ENCODE measurements at regions of chr12 and their contacts with region 1.

Region 1: GRCh38 chr12:70719672-70720420 is 82.6 kb upstream of the PTPRB start:
- DNase-seq: peak; percentile 55
- ATAC-seq: peak; percentile 76
- H3K4me3 Mint-ChIP-seq: peak overlapping the region; percentile 55
- H3K27ac Mint-ChIP-seq: no peak overlapping the region
- H3K4me1 Mint-ChIP-seq: peaks cover 19% of the 10 kb centered on the region
- H3K27me3 Mint-ChIP-seq: peaks cover 14% of the 10 kb centered on the region

Region 2: DNA sequence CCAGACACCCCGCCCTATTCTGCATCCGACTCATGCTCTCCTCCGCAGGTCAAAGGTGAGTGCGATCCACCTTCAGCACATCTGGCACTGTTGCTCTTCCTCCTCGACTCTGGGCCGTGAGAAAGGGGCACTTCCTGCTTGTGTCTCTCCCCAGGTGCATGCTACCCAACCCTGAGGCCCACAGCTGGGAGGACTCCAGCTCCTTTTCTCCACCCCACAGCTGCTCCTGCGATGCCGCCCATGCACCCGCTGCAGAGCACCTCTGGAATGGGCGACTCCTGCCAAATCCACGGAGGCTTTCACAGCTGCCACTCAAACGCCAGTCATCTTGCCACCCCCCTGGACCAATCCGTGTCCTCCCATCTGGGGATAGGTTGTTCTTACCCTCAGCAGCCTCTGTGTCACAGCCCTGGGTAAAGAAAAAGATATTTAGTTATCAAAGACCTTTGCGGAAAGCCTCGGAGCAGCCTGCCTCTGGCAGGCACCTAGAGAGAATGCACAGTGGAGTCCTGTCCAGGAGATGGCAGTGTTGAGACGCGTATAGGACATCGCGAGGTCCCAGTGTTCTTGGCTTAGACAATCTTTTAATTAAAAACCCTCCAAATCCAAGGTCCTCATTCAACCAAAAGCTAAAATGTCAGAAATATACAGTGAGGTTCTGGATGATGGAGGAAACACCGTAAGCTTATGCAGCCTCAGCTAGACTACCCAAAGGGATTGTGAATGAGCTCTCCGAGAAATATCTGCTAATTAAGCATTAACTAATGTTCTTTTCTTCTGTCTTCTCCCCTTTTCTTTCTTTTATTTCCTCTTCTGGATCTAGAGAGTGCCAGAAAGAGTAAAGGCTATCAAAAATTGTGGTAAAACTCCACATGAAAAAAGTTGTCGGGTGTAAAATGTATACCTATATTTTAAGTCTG is 840.5 kb before region 1 on chr12:
- CTCF ChIA-PET with region 1: interaction called, 4 read pairs
- POLR2A ChIA-PET with region 1: no interaction called
- intact Hi-C with region 1: loop called (anchors 1 to 5 kb)
- DNase-seq: peak; percentile 82
- ATAC-seq: peak; percentile 93
- H3K4me3 Mint-ChIP-seq: no peak overlapping the region
- H3K27ac Mint-ChIP-seq: no peak overlapping the region
- H3K4me1 Mint-ChIP-seq: peaks cover 6% of the 10 kb centered on the region
- H3K27me3 Mint-ChIP-seq: peaks cover 17% of the 10 kb centered on the region

Region 3: GRCh38 chr12:69900720-69901131 is 819.1 kb before region 1 on chr12:
- CTCF ChIA-PET with region 1: interaction called, 4 read pairs
- POLR2A ChIA-PET with region 1: no interaction called
- intact Hi-C with region 1: loop called (anchors 2 to 5 kb)
- DNase-seq: peak; percentile 76
- ATAC-seq: peak; percentile 30
- H3K4me3 Mint-ChIP-seq: no peak overlapping the region
- H3K27ac Mint-ChIP-seq: no peak overlapping the region
- H3K4me1 Mint-ChIP-seq: peaks cover 2% of the 10 kb centered on the region
- H3K27me3 Mint-ChIP-seq: no peaks in the 10 kb centered on the region

Region 4: GRCh38 chr12:70590051-70590450 is 129.8 kb before region 1 on chr12:
- CTCF ChIA-PET with region 1: interaction called, 5 read pairs
- POLR2A ChIA-PET with region 1: no interaction called
- intact Hi-C with region 1: loop called (anchors 1 kb)
- DNase-seq: peak; percentile 80
- ATAC-seq: peak; percentile 74
- H3K4me3 Mint-ChIP-seq: no peak overlapping the region
- H3K27ac Mint-ChIP-seq: no peak overlapping the region
- H3K4me1 Mint-ChIP-seq: no peaks in the 10 kb centered on the region
- H3K27me3 Mint-ChIP-seq: peaks cover 22% of the 10 kb centered on the region

Region 5: DNA sequence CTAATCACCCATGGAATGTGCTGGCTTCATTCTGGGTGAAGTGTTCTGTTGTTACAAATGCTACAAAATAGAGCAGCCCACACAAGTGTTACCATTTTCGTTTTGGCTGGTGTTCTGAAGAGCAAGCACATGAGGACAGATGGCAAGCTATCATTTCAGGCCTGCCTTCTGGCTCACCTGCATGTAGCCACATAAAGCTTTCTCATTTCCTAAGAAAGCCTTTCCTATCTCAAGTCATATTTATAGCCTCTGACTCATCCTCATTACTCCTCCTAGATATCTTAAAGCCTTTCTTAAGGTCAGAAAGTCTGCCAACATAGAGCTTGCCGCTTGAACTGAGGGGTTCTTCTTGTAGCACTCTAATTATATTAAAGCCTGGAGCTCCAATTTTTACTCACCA is 111.7 kb after region 1 on chr12:
- CTCF ChIA-PET with region 1: no interaction called
- POLR2A ChIA-PET with region 1: no interaction called
- intact Hi-C with region 1: no loop called
- DNase-seq: no peak
- ATAC-seq: no peak
- H3K4me3 Mint-ChIP-seq: no peak overlapping the region
- H3K27ac Mint-ChIP-seq: no peak overlapping the region
- H3K4me1 Mint-ChIP-seq: no peaks in the 10 kb centered on the region
- H3K27me3 Mint-ChIP-seq: peaks cover 5% of the 10 kb centered on the region